Activated B cell treated with CpG ODN at 0.5 μM for 24 hours (primary cell): ENCODE measurements at regions of chr19 and their contacts with region 1.

Region 1: DNA sequence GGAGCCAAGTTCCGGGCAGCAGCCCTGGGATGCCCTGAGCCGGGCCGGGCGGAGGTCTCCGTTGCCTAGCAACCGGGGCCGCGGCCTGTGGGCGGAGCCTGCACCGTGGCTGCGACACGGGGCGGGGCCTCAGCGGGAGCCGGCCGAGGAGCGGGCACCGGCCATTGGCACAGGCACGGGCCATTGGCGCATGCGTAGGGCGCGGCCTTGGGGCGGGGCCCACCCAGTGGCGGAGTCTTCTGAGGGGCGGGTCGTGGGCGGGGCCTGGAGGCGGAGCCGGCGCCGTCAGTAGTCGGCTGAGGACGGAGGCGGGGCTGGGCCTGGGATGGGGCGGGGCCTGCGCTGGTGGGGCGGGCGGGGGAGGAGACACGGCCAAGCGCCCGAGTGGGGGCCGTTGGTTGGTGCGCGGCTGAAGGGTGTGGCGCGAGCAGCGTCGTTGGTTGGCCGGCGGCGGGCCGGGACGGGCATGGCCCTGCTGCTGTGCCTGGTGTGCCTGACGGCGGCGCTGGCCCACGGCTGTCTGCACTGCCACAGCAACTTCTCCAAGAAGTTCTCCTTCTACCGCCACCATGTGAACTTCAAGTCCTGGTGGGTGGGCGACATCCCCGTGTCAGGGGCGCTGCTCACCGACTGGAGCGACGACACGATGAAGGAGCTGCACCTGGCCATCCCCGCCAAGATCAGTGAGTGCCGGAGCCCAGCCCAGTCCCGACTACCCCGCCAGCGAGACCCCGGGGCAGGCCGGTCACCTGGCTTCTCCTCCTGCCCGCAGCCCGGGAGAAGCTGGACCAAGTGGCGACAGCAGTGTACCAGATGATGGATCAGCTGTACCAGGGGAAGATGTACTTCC is at the start of gene IZUMO4:
- DNase-seq: peak; percentile 99
- ATAC-seq: peak; percentile 76
- H3K4me3 Mint-ChIP-seq: peak within 1 kb of the TSS; percentile 93
- H3K27ac Mint-ChIP-seq: peak within 1 kb of the TSS; percentile 95
- H3K4me1 Mint-ChIP-seq: peaks cover 38% of the 10 kb centered on the region
- H3K27me3 Mint-ChIP-seq: no peaks in the 10 kb centered on the region
- CTCF ChIP-seq: no peak
- total RNA-seq, gene IZUMO4: 73.0 and 78.6 TPM in 2 replicates

Region 2: DNA sequence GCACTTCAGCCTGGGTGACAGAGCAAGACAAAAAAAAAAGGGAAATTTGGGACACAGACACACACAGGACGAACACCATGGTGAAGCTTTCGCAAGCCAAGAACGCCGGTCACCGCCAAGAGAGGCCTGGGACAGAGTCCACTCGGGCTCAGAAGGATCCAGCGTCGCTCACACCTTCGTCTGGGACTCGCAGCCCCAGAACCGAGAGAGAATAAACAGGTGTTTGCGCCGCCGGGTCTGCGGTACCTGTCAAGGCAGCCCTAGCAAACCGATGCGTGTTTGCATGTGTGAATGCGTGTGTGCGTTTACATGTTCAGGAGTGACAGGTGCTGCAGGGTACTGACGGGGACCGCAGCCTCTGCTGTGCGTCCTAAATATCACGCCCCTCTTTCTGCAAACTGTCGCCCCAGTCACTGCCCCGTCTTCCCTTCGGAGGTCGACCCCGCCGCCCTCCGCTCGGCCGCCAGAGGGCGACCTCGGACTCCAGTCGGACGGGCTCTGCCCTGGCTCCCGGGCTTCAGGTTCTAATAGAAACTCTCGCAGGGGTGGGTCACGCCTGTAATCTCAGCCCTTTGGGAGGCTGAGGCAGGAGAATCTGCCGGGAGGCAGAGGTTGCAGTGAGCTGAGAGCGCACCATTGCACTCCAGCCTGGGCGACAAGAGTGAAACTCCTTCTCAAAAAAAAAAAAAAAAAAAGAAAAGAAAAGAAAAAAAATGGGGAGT is 167.5 kb before region 1 on chr19:
- CTCF ChIA-PET with region 1: interaction called, 3 read pairs
- POLR2A ChIA-PET with region 1: interaction called, 6 read pairs
- intact Hi-C with region 1: loop called (anchors 1 kb)
- DNase-seq: peak; percentile 86
- ATAC-seq: peak; percentile 82
- H3K4me3 Mint-ChIP-seq: peak overlapping the region; percentile 81
- H3K27ac Mint-ChIP-seq: no peak overlapping the region
- H3K4me1 Mint-ChIP-seq: peaks cover 46% of the 10 kb centered on the region
- H3K27me3 Mint-ChIP-seq: no peaks in the 10 kb centered on the region
- CTCF ChIP-seq: peak; percentile 59

Region 3: DNA sequence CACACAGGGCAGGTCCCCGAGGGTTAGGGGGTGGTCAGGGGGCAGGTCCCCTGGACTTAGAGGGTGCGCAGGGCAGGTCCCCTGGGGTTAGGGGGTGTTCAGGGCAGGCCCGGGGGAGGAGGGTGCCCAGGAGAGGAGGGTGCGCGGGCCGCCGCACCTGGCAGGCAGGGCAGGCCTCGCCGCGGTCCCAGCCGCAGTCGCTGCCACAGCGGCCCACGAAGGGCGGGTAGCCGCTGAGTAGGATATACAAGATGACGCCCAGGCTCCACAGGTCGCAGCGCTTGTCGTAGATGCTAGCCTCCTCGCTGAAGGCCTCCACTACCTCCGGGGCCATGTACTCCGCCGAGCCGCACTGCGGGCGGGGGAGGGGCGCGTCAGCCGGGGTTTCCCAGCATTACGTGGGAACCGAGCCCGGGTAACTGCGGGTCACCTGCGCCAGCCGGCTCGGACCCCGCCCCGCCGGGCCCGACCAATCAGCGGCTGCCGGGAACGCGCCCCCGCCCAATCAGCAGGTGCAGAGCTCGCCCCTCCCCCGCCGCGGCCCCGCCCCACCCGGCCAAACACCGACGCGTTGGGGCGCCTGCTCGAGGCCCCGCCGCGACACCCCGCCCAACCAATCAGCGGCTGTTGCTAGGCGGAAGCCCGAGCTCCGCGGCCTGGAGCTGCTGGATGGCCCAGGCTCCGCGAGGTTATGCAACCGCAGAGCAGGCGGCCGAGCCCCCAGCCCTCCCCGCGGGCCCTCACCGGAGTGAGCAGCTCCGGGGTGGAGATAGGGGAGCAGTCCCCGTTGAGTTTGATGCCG is 54.8 kb before region 1 on chr19:
- CTCF ChIA-PET with region 1: interaction called, 4 read pairs
- POLR2A ChIA-PET with region 1: interaction called, 2,723 read pairs
- intact Hi-C with region 1: loop called (anchors 1 kb)
- DNase-seq: peak; percentile 96
- ATAC-seq: peak; percentile 69
- H3K4me3 Mint-ChIP-seq: peak overlapping the region; percentile 61
- H3K27ac Mint-ChIP-seq: peak overlapping the region; percentile 81
- H3K4me1 Mint-ChIP-seq: peaks cover 70% of the 10 kb centered on the region
- H3K27me3 Mint-ChIP-seq: no peaks in the 10 kb centered on the region
- CTCF ChIP-seq: no peak

Region 4: DNA sequence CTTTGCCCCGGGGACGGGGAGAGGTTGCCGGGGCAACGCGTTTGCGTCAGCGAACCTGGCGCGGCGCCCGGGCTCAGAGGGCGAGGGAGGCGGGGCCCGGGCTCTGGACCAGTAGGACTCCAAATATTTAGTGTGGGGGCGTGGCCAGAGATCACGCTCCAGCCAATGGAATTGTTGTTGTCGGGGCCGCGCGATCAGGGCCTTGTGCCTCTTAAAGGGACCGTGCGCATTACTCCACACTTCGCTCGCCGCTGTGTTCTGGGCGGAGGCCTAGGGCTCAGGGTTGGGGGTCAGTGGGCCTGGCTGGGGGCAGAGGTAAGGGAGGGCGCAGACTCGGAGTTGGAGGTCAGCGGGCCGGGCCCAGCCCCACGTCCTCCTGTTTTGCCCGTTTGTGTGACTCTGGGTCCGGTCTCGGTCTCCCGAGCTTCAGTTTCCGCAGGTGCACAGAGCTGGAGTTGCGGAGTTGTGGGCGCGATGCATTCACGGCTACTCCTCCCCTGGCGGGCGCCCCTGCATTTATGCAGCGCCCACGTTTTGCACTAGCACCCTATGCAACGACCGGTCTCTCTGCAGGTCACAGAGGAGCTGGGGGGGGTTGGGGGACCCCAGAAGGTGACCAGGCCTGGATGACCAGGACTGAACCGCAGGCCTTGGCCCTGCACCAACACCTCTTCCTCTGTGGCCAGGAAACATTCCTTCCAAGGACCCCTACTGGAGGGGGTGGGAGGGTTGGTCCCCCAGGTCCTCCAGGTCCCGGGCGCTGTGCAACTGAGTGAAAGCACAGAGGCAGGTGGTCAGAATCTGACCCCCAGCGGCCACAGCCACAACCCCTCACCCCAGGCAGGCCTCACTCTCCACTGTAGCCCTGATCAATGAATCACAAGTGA is 35.0 kb before region 1 on chr19:
- CTCF ChIA-PET with region 1: interaction called, 3 read pairs
- POLR2A ChIA-PET with region 1: interaction called, 2,723 read pairs
- intact Hi-C with region 1: no loop called
- DNase-seq: peak; percentile 100
- ATAC-seq: peak; percentile 90
- H3K4me3 Mint-ChIP-seq: peak overlapping the region; percentile 87
- H3K27ac Mint-ChIP-seq: peak overlapping the region; percentile 88
- H3K4me1 Mint-ChIP-seq: peaks cover 48% of the 10 kb centered on the region
- H3K27me3 Mint-ChIP-seq: no peaks in the 10 kb centered on the region
- CTCF ChIP-seq: no peak

Region 5: GRCh38 chr19:2158535-2158934 is 61.8 kb after region 1 on chr19:
- CTCF ChIA-PET with region 1: no interaction called
- POLR2A ChIA-PET with region 1: no interaction called
- intact Hi-C with region 1: no loop called
- DNase-seq: no peak
- ATAC-seq: no peak
- H3K4me3 Mint-ChIP-seq: no peak overlapping the region
- H3K27ac Mint-ChIP-seq: no peak overlapping the region
- H3K4me1 Mint-ChIP-seq: peaks cover 10% of the 10 kb centered on the region
- H3K27me3 Mint-ChIP-seq: no peaks in the 10 kb centered on the region
- CTCF ChIP-seq: no peak

Region 6: DNA sequence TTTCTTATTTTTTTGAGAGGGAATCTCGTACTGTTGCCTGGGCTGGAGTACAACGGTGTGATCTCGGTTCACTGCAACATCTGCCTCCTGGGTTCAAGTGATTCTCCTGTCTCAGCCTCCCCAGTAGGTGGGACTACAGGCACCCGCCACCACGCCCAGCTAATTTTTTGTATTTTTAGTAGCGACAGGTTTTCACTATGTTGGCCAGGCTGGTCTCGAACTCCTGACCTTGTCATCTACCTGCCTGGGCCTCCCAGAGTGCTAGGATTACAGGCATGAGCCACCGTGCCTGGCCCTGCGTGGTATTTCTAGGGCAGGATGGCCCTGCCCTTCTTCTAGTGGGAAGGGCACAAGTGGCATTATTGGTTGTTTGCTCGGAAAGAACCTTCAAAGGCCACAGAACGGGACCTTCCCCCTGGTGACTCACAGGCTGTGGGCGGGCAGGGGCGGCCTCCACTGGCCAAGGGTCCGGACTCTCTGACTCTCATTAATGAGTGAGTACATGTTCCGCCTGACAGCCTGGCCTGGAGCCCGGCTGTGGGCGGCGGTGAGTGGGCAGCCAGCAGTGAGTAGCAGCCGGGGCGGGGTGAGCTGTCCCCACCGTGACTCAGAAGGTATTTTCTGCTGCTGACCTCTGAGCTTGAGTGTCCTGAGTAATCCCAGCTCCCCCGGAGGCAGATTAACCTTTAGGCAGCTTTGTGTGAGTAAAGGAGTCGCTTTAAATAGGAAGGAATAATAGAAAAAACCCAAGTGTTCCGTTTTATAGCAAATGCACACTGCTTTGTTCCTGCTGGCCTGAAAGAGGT is 72.1 kb after region 1 on chr19:
- CTCF ChIA-PET with region 1: no interaction called
- POLR2A ChIA-PET with region 1: interaction called, 22 read pairs
- intact Hi-C with region 1: loop called (anchors 2 kb)
- DNase-seq: peak; percentile 74
- ATAC-seq: peak; percentile 49
- H3K4me3 Mint-ChIP-seq: peak overlapping the region; percentile 84
- H3K27ac Mint-ChIP-seq: peak overlapping the region; percentile 92
- H3K4me1 Mint-ChIP-seq: peaks cover 84% of the 10 kb centered on the region
- H3K27me3 Mint-ChIP-seq: no peaks in the 10 kb centered on the region
- CTCF ChIP-seq: no peak

Region 7: GRCh38 chr19:2186071-2186846 is 89.6 kb after region 1 on chr19:
- CTCF ChIA-PET with region 1: no interaction called
- POLR2A ChIA-PET with region 1: no interaction called
- intact Hi-C with region 1: no loop called
- DNase-seq: no peak
- ATAC-seq: no peak
- H3K4me3 Mint-ChIP-seq: no peak overlapping the region
- H3K27ac Mint-ChIP-seq: no peak overlapping the region
- H3K4me1 Mint-ChIP-seq: peaks cover 64% of the 10 kb centered on the region
- H3K27me3 Mint-ChIP-seq: no peaks in the 10 kb centered on the region
- CTCF ChIP-seq: no peak

Region 8: DNA sequence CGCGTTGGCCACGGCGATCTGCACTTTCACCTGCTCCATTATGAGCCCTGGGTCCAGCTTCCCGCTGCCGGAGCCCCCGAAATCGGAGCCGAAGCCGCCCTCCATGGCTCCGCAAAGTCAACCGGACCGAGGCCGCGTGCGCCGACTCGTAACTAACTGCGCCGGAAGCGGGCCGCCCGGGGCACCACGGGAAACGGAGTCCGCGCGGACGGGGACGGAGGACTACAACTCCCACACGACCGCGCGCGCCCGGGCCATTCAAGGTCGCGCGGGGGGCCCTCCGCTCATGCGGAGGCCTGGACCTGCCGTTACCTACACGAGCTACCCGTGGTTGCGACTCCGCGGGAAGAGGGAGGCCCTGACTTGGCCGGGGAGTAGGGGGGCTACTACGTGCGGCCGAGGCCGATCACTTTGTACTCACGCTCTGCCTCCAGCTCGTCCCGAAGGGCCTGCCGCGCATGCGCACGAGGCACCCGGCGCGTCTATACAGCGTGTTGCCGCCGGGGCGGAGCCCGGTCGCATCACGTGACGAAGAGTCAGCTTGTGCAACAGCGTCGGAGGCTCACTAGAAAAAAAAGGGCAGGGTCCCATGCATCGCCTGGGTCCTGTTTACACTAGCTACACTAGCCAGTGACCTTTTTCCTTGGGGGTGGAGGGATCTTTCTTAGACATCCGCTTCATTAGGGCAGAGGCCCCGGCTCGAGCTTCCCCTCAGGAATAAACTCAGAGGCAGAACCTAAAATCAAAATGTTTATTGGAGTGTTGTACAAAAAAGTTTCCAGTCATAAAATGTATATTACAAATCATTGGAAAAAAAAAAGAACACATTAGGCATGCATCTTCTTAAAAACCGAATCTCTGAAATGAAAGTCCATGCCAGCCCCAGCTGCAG is 331.0 kb after region 1 on chr19 and contains the start of gene TIMM13:
- CTCF ChIA-PET with region 1: no interaction called
- POLR2A ChIA-PET with region 1: no interaction called
- intact Hi-C with region 1: loop called (anchors 1 kb)
- DNase-seq: peak; percentile 99
- ATAC-seq: peak; percentile 94
- H3K4me3 Mint-ChIP-seq: peak within 1 kb of the TSS; percentile 90
- H3K27ac Mint-ChIP-seq: peak within 1 kb of the TSS; percentile 95
- H3K4me1 Mint-ChIP-seq: peaks cover 21% of the 10 kb centered on the region
- H3K27me3 Mint-ChIP-seq: no peaks in the 10 kb centered on the region
- CTCF ChIP-seq: no peak
- total RNA-seq, gene TIMM13: 63.9 and 65.3 TPM in 2 replicates